ENCODE measurements at regions of chr6 and their contacts with region 1.

Region 1: GRCh38 chr6:93419304-93420162 is at the start of gene EPHA7:
- DNase-seq: peak; percentile 69 to 96
- H3K4me3 ChIP-seq: peak within 1 kb of the TSS; percentile 50
- H3K27ac ChIP-seq: no peak within 1 kb of the TSS
- H3K4me1 ChIP-seq: no peaks in the 10 kb centered on the region
- H3K27me3 ChIP-seq: no peaks in the 10 kb centered on the region
- CTCF ChIP-seq: no peak
- total RNA-seq, gene EPHA7: 0.57 and 1.0 TPM in 2 replicates

Region 2: GRCh38 chr6:92810913-92811312 is 608.6 kb before region 1 on chr6:
- CTCF ChIA-PET with region 1: interaction called, 4 read pairs
- POLR2A ChIA-PET with region 1: no interaction called
- intact Hi-C with region 1: loop called (anchors 5 kb)
- DNase-seq: peak in 1 of 2 experiments; percentile 29
- H3K4me3 ChIP-seq: no peak overlapping the region
- H3K27ac ChIP-seq: no peak overlapping the region
- H3K4me1 ChIP-seq: no peaks in the 10 kb centered on the region
- H3K27me3 ChIP-seq: no peaks in the 10 kb centered on the region
- CTCF ChIP-seq: peak; percentile 63

Region 3: GRCh38 chr6:93468291-93468690 is 48.8 kb after region 1 on chr6:
- CTCF ChIA-PET with region 1: no interaction called
- POLR2A ChIA-PET with region 1: no interaction called
- intact Hi-C with region 1: no loop called
- DNase-seq: no peak
- H3K4me3 ChIP-seq: no peak overlapping the region
- H3K27ac ChIP-seq: no peak overlapping the region
- H3K4me1 ChIP-seq: no peaks in the 10 kb centered on the region
- H3K27me3 ChIP-seq: no peaks in the 10 kb centered on the region
- CTCF ChIP-seq: no peak

Region 4: GRCh38 chr6:93496548-93496947 is 77.0 kb after region 1 on chr6:
- CTCF ChIA-PET with region 1: no interaction called
- POLR2A ChIA-PET with region 1: no interaction called
- intact Hi-C with region 1: no loop called
- DNase-seq: no peak
- H3K4me3 ChIP-seq: no peak overlapping the region
- H3K27ac ChIP-seq: no peak overlapping the region
- H3K4me1 ChIP-seq: no peaks in the 10 kb centered on the region
- H3K27me3 ChIP-seq: no peaks in the 10 kb centered on the region
- CTCF ChIP-seq: no peak